ENCODE measurements at regions of chrX and their contacts with region 1.

Region 1: DNA sequence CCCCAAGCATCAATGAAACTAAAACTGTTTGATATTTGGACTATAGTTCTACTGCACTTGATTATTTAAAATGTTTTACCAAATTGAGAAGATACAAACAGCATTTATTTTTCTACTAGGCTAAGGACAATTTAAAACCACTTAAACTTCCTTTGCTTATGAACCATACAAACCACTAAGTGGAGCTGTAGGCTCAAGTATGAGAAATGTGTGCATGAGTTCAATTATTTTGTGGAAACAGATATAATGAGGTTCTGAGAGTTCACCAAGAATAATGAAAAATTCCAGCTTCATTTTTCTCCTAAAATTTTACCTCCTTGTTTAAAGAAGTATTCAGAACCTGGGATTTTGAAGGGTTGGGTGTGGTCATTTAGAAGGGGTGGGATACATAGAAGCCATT is 63.1 kb downstream of the SERPINA7 start:
- DNase-seq: no peak
- ATAC-seq: no peak
- H3K4me3 ChIP-seq: no peak overlapping the region
- H3K27ac ChIP-seq: no peak overlapping the region
- H3K4me1 ChIP-seq: no peaks in the 10 kb centered on the region
- H3K27me3 ChIP-seq: peaks cover 0 to 7% (median 0%) of the 10 kb centered on the region in 3 donors
- CTCF ChIP-seq: no peak

Region 2: GRCh38 chrX:105695451-105695850 is 279.9 kb before region 1 on chrX:
- intact Hi-C with region 1: no loop called
- DNase-seq: no peak
- ATAC-seq: no peak
- H3K4me3 ChIP-seq: no peak overlapping the region
- H3K27ac ChIP-seq: no peak overlapping the region
- H3K4me1 ChIP-seq: peaks cover 7% of the 10 kb centered on the region
- H3K27me3 ChIP-seq: peaks cover 0 to 11% (median 0%) of the 10 kb centered on the region in 3 donors
- CTCF ChIP-seq: no peak

Region 3: GRCh38 chrX:106022238-106022637 is 46.9 kb after region 1 on chrX:
- intact Hi-C with region 1: no loop called
- DNase-seq: no peak
- ATAC-seq: no peak
- H3K4me3 ChIP-seq: no peak overlapping the region
- H3K27ac ChIP-seq: no peak overlapping the region
- H3K4me1 ChIP-seq: no peaks in the 10 kb centered on the region
- H3K27me3 ChIP-seq: peaks cover 0 to 4% (median 0%) of the 10 kb centered on the region in 3 donors
- CTCF ChIP-seq: no peak

Region 4: GRCh38 chrX:106397801-106398538 is 422.6 kb after region 1 on chrX:
- intact Hi-C with region 1: loop called in 1 of 2 experiments (anchors 10 kb)
- DNase-seq: no peak
- ATAC-seq: peak in 2 of 4 donors; percentile 36 to 63
- H3K4me3 ChIP-seq: no peak overlapping the region
- H3K27ac ChIP-seq: no peak overlapping the region
- H3K4me1 ChIP-seq: no peaks in the 10 kb centered on the region
- H3K27me3 ChIP-seq: peaks cover 0 to 10% (median 0%) of the 10 kb centered on the region in 3 donors
- CTCF ChIP-seq: peak; percentile 25

Measured in psoas muscle (tissue), 8 donors.